Colonic mucosa (tissue), 4 donors: ENCODE measurements at regions of chr4 and their contacts with region 1.

Region 1: DNA sequence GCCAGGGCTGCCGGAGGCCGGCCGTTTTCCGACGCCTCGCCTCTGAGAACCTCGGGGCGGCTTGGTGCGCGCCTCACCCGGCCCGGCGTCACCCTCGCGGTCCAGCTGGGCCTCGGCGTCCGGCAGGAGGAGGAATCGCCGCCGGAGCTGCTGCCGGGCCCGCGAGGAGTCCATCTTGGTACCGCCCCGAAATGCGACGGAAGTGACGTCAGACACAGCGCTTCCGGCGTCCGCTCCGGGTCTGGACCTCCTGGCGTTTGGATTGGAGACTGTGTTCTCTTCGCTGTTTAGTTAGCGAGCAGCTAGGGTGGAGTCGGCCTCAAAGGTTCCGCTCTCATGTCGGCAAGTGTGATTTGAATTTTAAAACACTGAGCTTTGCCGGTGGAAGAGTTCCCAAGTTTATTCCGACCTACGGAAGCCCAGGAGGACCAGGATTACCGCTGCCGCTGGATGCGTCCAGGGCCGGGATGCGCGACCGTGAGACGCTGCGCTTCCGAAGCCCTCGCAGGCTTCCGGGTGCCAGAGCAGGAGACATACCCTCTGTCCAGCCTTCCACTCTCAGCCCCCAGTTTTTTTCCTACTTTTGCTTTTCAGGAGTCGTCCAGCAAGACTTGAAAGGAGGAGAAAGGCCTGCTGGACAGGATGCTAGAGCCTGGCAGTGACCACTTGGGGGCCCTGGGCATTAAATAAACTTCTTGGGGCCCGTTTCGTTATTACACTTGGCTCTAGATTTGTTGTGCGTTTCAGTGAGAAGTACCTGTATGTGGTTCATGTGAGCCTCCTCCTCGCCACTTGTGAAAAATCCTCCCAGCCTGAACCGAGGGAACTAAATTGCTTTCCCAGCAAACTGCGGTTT is at the start of gene TMEM128:
- DNase-seq: peak; percentile 93
- H3K4me3 ChIP-seq: peak within 1 kb of the TSS; percentile 98
- H3K27ac ChIP-seq: peak within 1 kb of the TSS; percentile 93
- H3K4me1 ChIP-seq: peaks cover 11% of the 10 kb centered on the region
- H3K27me3 ChIP-seq: no peaks in the 10 kb centered on the region
- CTCF ChIP-seq: no peak
- total RNA-seq, gene TMEM128: 16.9 to 18.7 TPM

Region 2: DNA sequence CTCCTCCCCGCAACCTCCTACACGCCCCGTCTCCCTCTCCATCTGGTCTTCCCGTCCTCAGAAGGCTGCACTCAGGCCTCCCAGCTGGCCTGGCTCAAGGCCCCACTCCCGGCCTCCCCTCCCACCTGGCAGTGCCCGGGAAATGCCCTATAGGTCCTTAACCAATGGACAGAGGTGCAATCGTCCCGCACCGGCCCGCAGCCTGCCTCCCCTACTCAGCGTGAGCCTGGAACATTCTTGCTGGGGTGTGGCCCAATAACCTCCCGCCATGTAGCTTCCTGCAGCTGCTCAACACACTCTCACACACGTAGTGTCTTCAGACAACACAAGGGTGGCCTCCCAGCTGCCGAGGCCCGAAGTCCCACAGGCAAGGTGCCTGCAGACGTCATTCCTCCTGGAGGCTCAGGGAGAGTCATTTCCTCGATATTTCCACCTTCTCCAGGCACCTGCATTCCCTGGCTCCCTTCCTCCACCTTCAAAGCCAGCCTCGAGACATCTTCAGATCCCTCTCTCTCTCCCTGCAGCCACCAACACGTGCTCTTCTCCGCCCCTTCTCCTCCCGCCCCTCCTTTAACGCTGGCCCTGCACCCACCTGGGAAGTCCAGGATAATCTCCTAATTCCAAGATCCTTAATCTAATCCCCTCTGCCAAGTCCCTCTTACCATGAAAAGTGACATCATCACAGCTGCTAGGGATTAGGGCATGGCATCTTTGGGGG is 425.9 kb before region 1 on chr4:
- intact Hi-C with region 1: no loop called
- DNase-seq: peak; percentile 47
- H3K4me3 ChIP-seq: no peak overlapping the region
- H3K27ac ChIP-seq: no peak overlapping the region
- H3K4me1 ChIP-seq: no peaks in the 10 kb centered on the region
- H3K27me3 ChIP-seq: no peaks in the 10 kb centered on the region
- CTCF ChIP-seq: no peak

Region 3: DNA sequence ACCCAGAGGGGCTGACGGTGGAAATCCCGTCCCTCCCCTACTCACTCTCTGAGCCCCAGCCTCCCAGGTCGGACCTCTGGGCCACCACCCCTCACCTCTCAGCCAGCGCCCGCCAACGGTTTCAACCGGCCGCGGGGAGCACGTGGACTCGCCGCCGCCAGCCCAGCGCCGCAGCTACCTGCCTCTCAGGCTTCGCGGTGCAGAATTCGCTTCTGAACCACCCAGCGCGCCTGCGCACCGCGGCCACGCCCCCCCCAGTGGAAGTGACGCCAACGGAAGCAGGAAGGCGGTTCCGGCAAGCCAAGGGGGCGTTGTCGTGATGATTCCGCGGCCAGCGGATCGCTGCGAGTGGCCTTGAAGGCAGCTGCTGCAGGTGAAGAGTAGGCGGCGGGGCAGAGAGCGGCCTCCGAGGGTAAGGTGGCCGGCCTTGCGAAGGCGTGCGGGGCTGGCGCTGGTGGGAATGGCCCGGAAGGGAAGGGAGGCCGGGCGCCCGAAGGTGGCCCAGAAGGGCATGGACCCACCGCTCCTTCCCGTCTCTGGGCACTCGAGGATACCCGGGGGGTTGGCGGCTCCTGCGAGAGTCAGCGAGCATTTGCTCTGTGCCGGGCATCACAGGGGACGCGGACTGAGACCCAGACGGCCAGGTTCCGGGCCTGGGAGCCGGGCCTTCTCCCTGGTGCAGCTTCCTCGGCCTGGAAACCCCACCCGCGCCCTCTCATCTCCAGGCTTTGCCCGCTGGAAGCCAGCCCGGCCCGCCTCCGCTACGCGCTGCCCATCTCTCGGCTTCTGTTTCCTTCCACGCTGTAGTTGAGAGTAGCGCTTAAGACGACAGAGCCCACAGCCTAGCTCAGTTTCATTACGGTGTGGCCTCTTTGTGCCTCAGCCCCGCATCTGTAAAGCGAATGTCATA is 41.9 kb after region 1 on chr4 and contains the starts of genes LYAR and ZBTB49:
- intact Hi-C with region 1: loop called (anchors 5 kb)
- DNase-seq: peak; percentile 98
- H3K4me3 ChIP-seq: peak within 1 kb of the TSS; percentile 97
- H3K27ac ChIP-seq: peak within 1 kb of the TSS; percentile 78
- H3K4me1 ChIP-seq: peaks cover 16% of the 10 kb centered on the region
- H3K27me3 ChIP-seq: no peaks in the 10 kb centered on the region
- CTCF ChIP-seq: no peak
- total RNA-seq, gene LYAR: 6.7 to 16.7 TPM
- total RNA-seq, gene ZBTB49: 4.0 to 5.1 TPM